Calu3 (cell line): ENCODE measurements at regions of chr14 and their contacts with region 1.

Region 1: DNA sequence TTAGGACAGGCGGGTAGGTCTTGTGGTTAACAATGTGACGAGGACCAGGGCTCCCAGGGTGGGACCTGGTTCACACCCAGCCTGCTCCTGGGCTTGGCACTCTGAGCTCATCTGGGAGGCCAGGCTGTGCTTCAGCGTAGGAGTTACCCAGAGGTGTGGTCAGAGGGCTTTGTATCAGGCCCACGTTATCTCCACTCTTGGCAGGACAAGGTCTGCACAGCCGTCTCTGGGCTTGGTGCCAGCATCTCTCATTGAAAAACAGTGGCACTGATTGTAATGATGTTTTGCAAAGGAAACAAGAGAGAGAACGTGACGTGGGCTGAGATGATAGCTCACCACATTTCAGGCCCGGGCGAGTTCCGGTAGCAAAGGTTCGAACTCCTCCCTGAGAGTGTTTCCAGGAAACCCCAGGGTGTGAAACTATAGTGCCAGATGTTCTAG is 227.1 kb downstream of the KTN1 start:
- DNase-seq: peak; percentile 90
- H3K4me3 Mint-ChIP-seq: peak overlapping the region; percentile 1
- H3K27ac Mint-ChIP-seq: peak overlapping the region; percentile 92
- H3K4me1 Mint-ChIP-seq: peaks cover 61% of the 10 kb centered on the region
- H3K27me3 Mint-ChIP-seq: no peaks in the 10 kb centered on the region
- CTCF ChIP-seq: no peak

Region 2: GRCh38 chr14:55731881-55732498 is 75.1 kb before region 1 on chr14:
- CTCF ChIA-PET with region 1: interaction called, 3 read pairs
- intact Hi-C with region 1: loop called (anchors 5 kb)
- DNase-seq: peak; percentile 58
- H3K4me3 Mint-ChIP-seq: no peak overlapping the region
- H3K27ac Mint-ChIP-seq: no peak overlapping the region
- H3K4me1 Mint-ChIP-seq: peaks cover 31% of the 10 kb centered on the region
- H3K27me3 Mint-ChIP-seq: no peaks in the 10 kb centered on the region
- CTCF ChIP-seq: peak; percentile 61

Region 3: GRCh38 chr14:55819610-55820304 is 12.7 kb after region 1 on chr14:
- CTCF ChIA-PET with region 1: interaction called, 13 read pairs
- intact Hi-C with region 1: no loop called
- DNase-seq: peak; percentile 56
- H3K4me3 Mint-ChIP-seq: peak overlapping the region; percentile 46
- H3K27ac Mint-ChIP-seq: peak overlapping the region; percentile 98
- H3K4me1 Mint-ChIP-seq: peaks cover 39% of the 10 kb centered on the region
- H3K27me3 Mint-ChIP-seq: no peaks in the 10 kb centered on the region
- CTCF ChIP-seq: no peak

Region 4: GRCh38 chr14:55840821-55841220 is 33.7 kb after region 1 on chr14:
- CTCF ChIA-PET with region 1: no interaction called
- intact Hi-C with region 1: loop called (anchors 1 kb)
- DNase-seq: no peak
- H3K4me3 Mint-ChIP-seq: no peak overlapping the region
- H3K27ac Mint-ChIP-seq: no peak overlapping the region
- H3K4me1 Mint-ChIP-seq: peaks cover 33% of the 10 kb centered on the region
- H3K27me3 Mint-ChIP-seq: no peaks in the 10 kb centered on the region
- CTCF ChIP-seq: no peak

Region 5: GRCh38 chr14:55976219-55976618 is 169.1 kb after region 1 on chr14:
- CTCF ChIA-PET with region 1: no interaction called
- intact Hi-C with region 1: loop called (anchors 10 kb)
- DNase-seq: peak; percentile 57
- H3K4me3 Mint-ChIP-seq: no peak overlapping the region
- H3K27ac Mint-ChIP-seq: peak overlapping the region; percentile 38
- H3K4me1 Mint-ChIP-seq: peaks cover 28% of the 10 kb centered on the region
- H3K27me3 Mint-ChIP-seq: no peaks in the 10 kb centered on the region
- CTCF ChIP-seq: no peak